ENCODE measurements at regions of chr1 and their contacts with region 1.

Region 1: GRCh38 chr1:167669209-167670124 is 39.4 kb downstream of the RCSD1 start:
- DNase-seq: no peak

Region 2: DNA sequence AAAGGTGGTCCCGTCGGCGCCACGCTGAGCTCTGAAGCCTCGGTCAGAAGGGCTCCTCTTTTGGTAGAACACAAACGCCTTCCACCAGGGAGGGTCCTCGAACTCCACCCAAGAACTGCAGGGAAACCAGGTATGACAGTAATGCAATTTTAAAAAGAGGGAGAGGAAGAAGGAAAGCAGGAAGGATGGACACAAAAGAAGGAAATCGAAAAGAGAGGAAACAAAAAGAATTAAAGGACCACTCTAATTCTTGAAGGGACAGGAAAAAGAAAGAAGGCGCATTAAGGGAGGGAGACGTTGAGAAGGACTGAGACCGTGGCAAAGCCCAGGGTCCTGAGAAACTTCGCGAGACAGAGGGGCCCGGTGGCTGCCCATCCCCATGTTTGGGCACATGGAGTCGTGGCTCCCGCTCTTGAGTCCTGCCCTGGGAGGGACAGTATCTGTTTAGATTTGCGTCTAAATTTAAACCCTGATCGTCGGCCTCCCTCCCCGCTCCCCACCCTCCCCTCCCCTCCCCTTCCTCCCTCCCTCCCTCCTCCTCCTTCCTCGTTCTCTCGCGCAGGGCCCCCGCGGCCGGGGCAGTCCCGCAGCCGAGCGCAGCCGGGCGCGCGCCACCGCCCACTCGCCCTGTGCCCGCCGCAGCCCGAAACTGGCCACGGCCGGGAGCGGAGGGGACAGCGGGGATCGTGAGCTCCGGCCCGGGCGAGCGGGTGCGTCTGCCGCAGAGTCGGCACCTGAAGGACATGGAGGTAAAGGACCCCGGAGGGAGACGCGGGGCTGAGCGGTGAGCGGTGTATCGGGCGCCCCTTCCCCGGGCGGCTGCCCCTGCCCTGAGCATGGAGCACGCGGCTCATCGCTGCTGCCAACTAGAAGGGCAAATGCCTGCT is 39.5 kb before region 1 on chr1 and contains the start of gene RCSD1:
- intact Hi-C with region 1: loop called (anchors 5 kb)
- DNase-seq: peak; percentile 90
- total RNA-seq, gene RCSD1: 32.7 TPM

Region 3: DNA sequence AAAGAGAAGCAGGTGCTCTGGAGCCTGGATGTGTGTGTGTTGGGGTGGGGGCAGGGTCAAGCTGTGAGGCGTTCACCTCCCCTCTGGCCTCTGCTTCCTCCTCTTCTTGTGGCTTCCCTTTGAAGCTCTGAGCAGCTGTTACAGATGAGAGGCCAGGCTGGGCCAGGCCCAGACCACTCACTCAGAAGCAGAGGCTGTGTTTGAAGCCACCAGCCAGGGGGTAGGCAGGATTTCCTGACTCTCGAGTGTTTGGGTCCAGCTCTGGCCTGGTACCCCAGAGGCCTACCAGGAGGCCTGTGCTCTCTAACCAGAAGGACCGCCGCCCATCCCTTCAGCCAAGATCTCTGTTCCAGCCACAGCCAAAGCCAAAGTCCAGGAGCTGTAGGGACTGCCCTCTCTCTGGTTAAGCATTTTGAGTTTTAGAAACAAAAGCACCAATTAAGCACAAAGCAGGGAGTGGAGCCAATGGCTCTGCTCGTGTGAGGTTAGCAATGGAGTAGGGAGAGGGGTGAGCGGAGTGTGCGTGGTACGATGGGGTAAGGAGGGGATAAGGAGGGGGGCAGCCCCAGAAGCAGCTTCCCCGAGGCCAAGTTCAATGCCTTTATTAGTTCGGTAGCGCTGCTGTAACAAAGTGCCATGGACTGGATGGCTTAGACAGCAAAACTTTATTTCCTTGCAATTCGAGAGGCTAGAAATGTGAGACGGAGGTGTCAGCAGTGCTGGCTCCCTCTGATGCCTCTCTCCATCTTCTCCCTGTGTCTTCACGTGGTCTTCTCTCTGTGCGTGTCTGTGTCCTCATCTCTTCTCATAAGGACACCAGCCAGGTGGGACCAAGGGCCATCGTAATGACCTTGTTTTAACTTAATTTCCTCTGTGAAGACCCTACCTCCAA is 19.0 kb before region 1 on chr1:
- intact Hi-C with region 1: loop called (anchors 2 kb)
- DNase-seq: peak; percentile 77

Measured in cardiac septum (tissue), 1 donor.